ENCODE measurements at regions of chr14 and their contacts with region 1.

Region 1: GRCh38 chr14:23555882-23556699 is at the start of gene THTPA:
- DNase-seq: peak; percentile 97
- ATAC-seq: peak; percentile 95
- total RNA-seq, gene THTPA: 17.3 to 18.9 TPM

Region 2: DNA sequence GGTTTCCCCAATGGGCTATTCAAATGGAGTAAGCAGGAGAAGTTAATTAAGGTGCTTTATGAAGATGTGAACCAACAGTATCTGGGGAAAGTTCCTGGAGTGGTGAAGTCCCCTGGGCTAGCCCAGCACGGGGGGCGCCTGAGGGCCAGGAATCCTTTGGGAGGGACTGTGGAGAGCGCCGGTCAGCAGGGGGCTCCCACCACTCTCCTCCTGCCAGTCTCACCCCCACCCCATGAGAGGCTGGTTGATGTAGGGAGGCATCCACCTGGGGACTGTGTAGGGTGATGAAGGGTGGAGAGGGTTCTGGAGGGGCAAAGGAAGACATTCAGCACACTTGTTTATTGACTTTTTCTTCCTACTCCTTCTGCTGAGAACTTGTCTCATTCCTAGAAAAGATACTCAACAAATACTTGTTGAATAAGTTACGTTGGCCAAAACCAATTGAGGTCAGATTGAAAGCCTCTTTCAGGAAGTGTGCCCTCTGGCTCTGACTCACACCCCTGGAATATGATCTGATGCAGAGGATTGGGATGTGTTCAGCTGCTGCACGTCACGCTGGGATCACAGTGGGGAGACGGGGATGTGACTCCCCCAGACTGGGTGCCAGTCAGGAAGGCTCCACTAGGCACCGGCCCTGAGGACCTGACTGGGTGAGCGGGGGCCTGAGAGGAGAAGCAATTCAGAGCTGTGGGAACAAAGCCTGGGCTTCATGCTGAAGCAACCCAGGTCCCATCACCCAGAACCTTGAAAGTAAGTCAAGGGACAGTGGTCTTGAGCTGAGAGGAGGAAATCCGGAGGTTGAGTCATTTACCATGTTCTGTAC is 441.2 kb before region 1 on chr14:
- intact Hi-C with region 1: loop called in 1 of 2 experiments (anchors 5 kb)
- DNase-seq: no peak
- ATAC-seq: peak; percentile 19 to 76

Region 3: GRCh38 chr14:23478111-23478759 is 77.9 kb before region 1 on chr14:
- intact Hi-C with region 1: loop called (anchors 2 to 5 kb)
- DNase-seq: peak; percentile 57
- ATAC-seq: peak; percentile 47 to 68